Caco-2 (cell line): ENCODE measurements at regions of chr18 and their contacts with region 1.

Region 1: DNA sequence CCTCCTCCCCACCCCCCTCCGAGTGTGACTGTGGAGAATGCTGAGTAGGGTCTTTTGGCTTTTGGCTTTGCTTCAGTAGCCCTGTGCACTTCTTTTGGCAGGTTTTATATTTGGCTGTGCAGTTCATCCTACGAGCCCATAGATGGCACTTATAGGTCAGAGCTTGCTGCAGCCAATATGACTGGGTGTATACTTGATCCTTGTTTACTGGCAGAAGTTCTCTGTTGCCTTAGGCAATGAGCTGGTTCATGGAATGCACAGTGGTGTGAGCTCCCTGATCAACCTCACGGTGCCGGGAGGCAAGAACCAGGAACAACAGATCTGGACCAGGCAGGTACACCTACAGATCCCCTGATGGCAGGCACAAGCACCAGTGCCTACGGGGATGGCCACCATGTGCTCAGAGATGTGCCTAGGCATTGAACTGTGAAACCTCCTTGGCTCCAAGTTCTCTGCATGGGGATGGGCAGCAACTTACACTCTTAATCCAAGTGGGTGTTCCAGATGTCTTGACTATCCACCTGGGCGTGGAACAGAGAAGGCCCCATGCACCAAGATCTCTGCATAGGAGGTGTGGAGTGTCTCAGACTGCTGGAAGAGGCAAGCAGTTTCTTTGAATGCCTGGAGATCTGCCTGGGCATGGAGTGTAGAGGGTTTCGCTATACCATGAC is 190.4 kb downstream of the KIAA1328 start:
- DNase-seq: peak; percentile 30 to 31
- H3K4me3 ChIP-seq: no peak overlapping the region
- H3K4me3 Mint-ChIP-seq: no peak overlapping the region
- H3K27ac Mint-ChIP-seq: no peak overlapping the region
- H3K4me1 ChIP-seq: no peaks in the 10 kb centered on the region
- H3K4me1 Mint-ChIP-seq: no peaks in the 10 kb centered on the region
- H3K27me3 ChIP-seq: no peaks in the 10 kb centered on the region
- H3K27me3 Mint-ChIP-seq: no peaks in the 10 kb centered on the region
- CTCF ChIP-seq: peak; percentile 19 to 38

Region 2: GRCh38 chr18:37259711-37260110 is 240.4 kb after region 1 on chr18:
- CTCF ChIA-PET with region 1: interaction called, 4 read pairs
- POLR2A ChIA-PET with region 1: no interaction called
- intact Hi-C with region 1: loop called (anchors 5 kb)
- DNase-seq: no peak
- H3K4me3 ChIP-seq: no peak overlapping the region
- H3K4me3 Mint-ChIP-seq: no peak overlapping the region
- H3K27ac Mint-ChIP-seq: no peak overlapping the region
- H3K4me1 ChIP-seq: no peaks in the 10 kb centered on the region
- H3K4me1 Mint-ChIP-seq: no peaks in the 10 kb centered on the region
- H3K27me3 ChIP-seq: no peaks in the 10 kb centered on the region
- H3K27me3 Mint-ChIP-seq: peaks cover 5% of the 10 kb centered on the region
- CTCF ChIP-seq: no peak

Region 3: DNA sequence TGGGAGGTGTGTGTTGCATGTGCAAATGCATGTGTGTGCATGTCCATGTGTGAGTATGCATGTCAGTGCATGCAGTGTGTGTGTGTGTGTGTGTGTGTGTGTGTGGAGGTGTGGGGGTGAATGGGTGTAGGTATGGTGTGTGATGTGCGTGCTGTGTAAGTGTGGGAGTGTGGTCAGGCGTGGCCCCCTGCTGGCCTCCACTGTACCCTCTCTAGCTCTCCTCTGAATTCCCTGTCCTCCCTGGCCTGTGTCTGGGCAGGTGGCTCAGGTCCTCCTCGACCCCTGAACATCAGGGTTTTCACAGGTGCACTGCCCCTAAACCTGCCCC is 316.1 kb after region 1 on chr18:
- CTCF ChIA-PET with region 1: no interaction called
- POLR2A ChIA-PET with region 1: no interaction called
- intact Hi-C with region 1: loop called (anchors 5 kb)
- DNase-seq: peak in 1 of 2 experiments; percentile 13
- H3K4me3 ChIP-seq: no peak overlapping the region
- H3K4me3 Mint-ChIP-seq: no peak overlapping the region
- H3K27ac Mint-ChIP-seq: no peak overlapping the region
- H3K4me1 ChIP-seq: no peaks in the 10 kb centered on the region
- H3K4me1 Mint-ChIP-seq: no peaks in the 10 kb centered on the region
- H3K27me3 ChIP-seq: no peaks in the 10 kb centered on the region
- H3K27me3 Mint-ChIP-seq: no peaks in the 10 kb centered on the region
- CTCF ChIP-seq: peak in 1 of 2 experiments; percentile 38